Common myeloid progenitor, CD34-positive (primary cell): ENCODE measurements at regions of chr1 and their contacts with region 1.

Region 1: DNA sequence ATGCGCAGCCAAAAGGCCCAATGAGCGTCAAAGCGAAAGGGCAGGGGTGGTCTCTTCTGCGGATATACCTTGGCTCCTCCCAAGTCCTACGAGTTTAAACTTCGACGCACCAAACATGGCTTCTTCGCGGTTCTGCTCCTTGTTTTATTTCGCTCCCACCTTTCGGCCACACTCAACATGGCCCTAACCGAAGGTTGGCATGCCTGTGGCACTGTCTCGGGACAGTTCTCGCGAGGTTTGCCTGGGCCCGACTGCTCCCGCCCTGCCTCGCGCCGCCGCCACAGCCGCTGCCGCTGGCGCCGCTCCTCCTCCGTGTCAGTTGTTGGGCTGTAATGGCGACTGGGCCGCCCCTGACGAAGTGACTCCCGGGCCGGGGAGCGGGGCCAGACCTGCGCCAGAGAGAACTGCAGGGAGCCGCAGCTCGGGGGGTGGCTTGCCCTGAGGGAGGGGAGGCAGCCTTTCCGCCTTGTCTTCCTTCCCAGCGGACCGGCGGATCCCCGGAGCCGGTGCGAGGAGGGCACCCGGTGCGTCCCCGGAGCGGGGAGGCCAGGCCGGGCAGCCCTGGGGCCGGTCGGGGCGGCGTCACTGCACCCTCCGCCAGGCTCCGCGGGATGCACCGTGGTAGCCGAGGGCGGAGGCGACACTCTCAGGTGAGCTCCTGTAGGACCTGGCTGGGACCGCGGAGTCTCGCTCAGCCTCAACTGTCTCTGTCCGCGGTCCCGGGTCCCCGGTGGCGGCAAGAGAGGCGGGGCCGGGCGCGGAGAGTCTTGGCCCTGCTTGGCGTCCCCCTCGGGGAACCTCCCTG is at the start of gene CEP350:
- DNase-seq: peak; percentile 99 to 100 (median 100)
- H3K4me3 ChIP-seq: peak within 1 kb of the TSS; percentile 84 to 100 (median 95)
- H3K27ac ChIP-seq: peak within 1 kb of the TSS; percentile 90 to 97
- H3K4me1 ChIP-seq: peaks cover 14 to 46% (median 40%) of the 10 kb centered on the region in 4 experiments
- H3K27me3 ChIP-seq: no peaks in the 10 kb centered on the region

Region 2: DNA sequence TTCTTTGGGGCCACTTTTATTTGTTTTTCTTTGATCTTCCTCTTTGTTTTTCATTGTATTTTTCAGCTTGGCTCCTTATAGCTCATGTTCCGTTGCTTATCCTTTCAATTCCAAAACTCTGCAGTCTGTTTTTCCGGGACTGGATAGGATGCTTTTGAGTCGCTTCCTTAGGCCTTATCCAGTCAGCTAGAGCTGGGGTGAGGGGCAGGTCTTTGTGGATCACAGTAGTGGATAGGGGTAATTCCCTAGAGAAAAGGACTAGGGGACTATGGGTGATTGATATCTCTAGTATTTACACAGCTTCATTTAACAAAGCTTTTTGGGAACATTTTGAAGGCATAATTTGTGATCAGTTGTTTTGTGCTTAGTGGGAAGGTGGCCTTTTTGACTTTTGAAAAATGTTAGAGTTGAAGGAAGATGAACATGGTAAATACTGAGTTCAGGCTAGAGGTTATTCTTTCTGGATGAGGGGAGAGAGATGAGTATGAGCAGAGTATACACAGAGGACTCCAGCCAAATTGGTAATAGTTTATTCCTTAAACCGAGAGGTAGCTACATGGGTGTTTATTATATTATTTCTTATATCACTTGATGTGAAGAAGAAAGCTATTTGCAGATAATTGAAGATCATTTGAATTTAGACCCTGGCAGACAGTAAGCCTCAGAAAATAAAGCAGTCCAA is 22.4 kb after region 1 on chr1:
- CTCF ChIA-PET with region 1: interaction called, 11 read pairs
- POLR2A ChIA-PET with region 1: no interaction called
- DNase-seq: no peak
- H3K4me3 ChIP-seq: peak overlapping the region in 2 of 7 experiments; percentile 11 to 28
- H3K27ac ChIP-seq: peak overlapping the region in 1 of 2 experiments; percentile 41
- H3K4me1 ChIP-seq: peaks cover 0 to 17% (median 0%) of the 10 kb centered on the region in 4 experiments
- H3K27me3 ChIP-seq: no peaks in the 10 kb centered on the region

Region 3: DNA sequence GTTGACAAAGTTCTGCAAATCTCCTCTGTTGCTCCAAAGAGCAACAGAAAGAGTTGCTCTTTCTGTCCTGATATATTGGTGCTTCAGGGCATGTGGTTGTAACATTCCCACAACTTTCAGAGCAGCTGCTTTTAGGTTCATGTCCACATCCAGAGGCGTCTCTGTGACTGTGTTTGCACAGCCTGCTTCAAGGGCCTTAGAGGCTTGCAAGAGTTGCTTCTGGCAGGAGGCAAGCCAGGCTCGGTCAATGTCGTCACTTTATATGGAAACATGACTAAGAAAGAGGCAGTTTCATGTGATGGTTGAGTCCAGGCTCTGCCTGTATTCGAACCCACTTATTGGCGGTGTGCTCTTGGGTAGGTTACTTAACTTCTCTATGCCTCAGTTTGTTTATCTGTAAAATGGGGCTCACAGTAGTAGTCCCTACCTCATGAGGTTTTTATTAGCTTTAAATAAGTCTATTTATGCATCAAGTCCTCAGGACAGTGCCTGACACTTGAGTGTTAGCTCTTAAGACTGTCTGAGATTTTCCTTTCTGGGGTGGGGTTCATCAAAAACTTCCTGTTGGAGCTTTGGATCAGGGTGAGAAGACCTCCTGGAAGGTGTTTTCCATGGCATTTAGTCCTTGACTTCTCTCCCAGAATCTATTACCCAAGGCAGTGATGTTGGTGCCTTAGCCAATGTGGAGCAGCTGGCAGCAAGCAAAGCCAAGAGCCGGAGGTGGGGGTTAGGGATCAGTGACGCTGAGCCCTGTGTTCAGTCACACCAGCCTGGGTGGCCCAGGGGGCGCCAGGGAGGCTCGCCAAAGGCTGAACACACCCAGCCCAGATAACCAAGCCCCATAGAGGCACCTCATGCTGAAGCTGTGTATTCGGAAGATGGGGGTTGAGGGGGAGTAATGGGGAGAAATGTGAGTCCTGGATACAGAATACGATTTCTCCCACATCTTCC is 294.3 kb after region 1 on chr1:
- CTCF ChIA-PET with region 1: no interaction called
- POLR2A ChIA-PET with region 1: no interaction called
- DNase-seq: peak in 2 of 3 donors; percentile 27 to 29
- H3K4me3 ChIP-seq: no peak overlapping the region
- H3K27ac ChIP-seq: no peak overlapping the region
- H3K4me1 ChIP-seq: no peaks in the 10 kb centered on the region
- H3K27me3 ChIP-seq: peaks cover 0 to 5% (median 0%) of the 10 kb centered on the region in 5 experiments